ENCODE measurements at regions of chr5 and their contacts with region 1.

Region 1: GRCh38 chr5:115544436-115545350 is at the start of gene FEM1C:
- DNase-seq: peak; percentile 83
- ATAC-seq: peak; percentile 94
- H3K4me3 ChIP-seq: peak within 1 kb of the TSS; percentile 81
- H3K27ac ChIP-seq: peak within 1 kb of the TSS; percentile 88
- H3K4me1 ChIP-seq: peaks cover 4% of the 10 kb centered on the region
- H3K27me3 ChIP-seq: no peaks in the 10 kb centered on the region
- CTCF ChIP-seq: no peak
- EP300 ChIP-seq: no peak
- POLR2A ChIP-seq: peak; percentile 100
- RAD21 ChIP-seq: no peak
- polyA plus RNA-seq, gene FEM1C: 1.9 to 7.1 TPM

Region 2: GRCh38 chr5:114435885-114436299 is 1108.8 kb before region 1 on chr5:
- CTCF ChIA-PET with region 1: no interaction called
- POLR2A ChIA-PET with region 1: no interaction called
- RAD21 ChIA-PET with region 1: no interaction called
- SMC1A ChIA-PET with region 1: no interaction called
- in situ Hi-C with region 1: no loop called
- intact Hi-C with region 1: loop called (anchors 10 kb)
- DNase-seq: peak; percentile 73
- ATAC-seq: peak; percentile 84
- H3K4me3 ChIP-seq: no peak overlapping the region
- H3K27ac ChIP-seq: no peak overlapping the region
- H3K4me1 ChIP-seq: no peaks in the 10 kb centered on the region; the same call in 1 of the 2 replicates
- H3K27me3 ChIP-seq: no peaks in the 10 kb centered on the region
- CTCF ChIP-seq: no peak
- EP300 ChIP-seq: peak; percentile 69 to 82; a peak in 2 of 4 replicates
- POLR2A ChIP-seq: no peak
- RAD21 ChIP-seq: no peak

Region 3: GRCh38 chr5:115487756-115488155 is 56.9 kb before region 1 on chr5:
- CTCF ChIA-PET with region 1: no interaction called
- POLR2A ChIA-PET with region 1: interaction called, 3 read pairs
- RAD21 ChIA-PET with region 1: interaction called, 3 read pairs
- SMC1A ChIA-PET with region 1: interaction called, 3 read pairs
- in situ Hi-C with region 1: no loop called
- intact Hi-C with region 1: loop called (anchors 2 kb)
- DNase-seq: no peak
- ATAC-seq: peak; percentile 79
- H3K4me3 ChIP-seq: no peak overlapping the region
- H3K27ac ChIP-seq: no peak overlapping the region
- H3K4me1 ChIP-seq: peaks cover 11% of the 10 kb centered on the region
- H3K27me3 ChIP-seq: no peaks in the 10 kb centered on the region
- CTCF ChIP-seq: no peak
- EP300 ChIP-seq: no peak
- POLR2A ChIP-seq: no peak
- RAD21 ChIP-seq: no peak

Region 4: GRCh38 chr5:115579747-115580173 is 35.1 kb after region 1 on chr5:
- CTCF ChIA-PET with region 1: interaction called, 58 read pairs
- POLR2A ChIA-PET with region 1: interaction called, 9 read pairs
- RAD21 ChIA-PET with region 1: interaction called, 66 read pairs
- SMC1A ChIA-PET with region 1: interaction called, 74 read pairs
- in situ Hi-C with region 1: no loop called
- intact Hi-C with region 1: loop called (anchors 2 kb)
- DNase-seq: peak; percentile 77
- ATAC-seq: peak; percentile 81
- H3K4me3 ChIP-seq: no peak overlapping the region
- H3K27ac ChIP-seq: peak overlapping the region; percentile 85
- H3K4me1 ChIP-seq: peaks cover 44% of the 10 kb centered on the region
- H3K27me3 ChIP-seq: no peaks in the 10 kb centered on the region
- CTCF ChIP-seq: no peak
- EP300 ChIP-seq: peak; percentile 60 to 63; a peak in 2 of 4 replicates
- POLR2A ChIP-seq: no peak
- RAD21 ChIP-seq: no peak

Region 5: GRCh38 chr5:115625579-115626444 is 81.1 kb after region 1 on chr5 and contains the start of gene TMED7:
- CTCF ChIA-PET with region 1: interaction called, 4 read pairs
- POLR2A ChIA-PET with region 1: interaction called, 8 read pairs
- RAD21 ChIA-PET with region 1: interaction called, 8 read pairs
- SMC1A ChIA-PET with region 1: interaction called, 11 read pairs
- in situ Hi-C with region 1: no loop called
- intact Hi-C with region 1: loop called (anchors 2 kb)
- DNase-seq: peak; percentile 95
- ATAC-seq: peak; percentile 93
- H3K4me3 ChIP-seq: peak within 1 kb of the TSS; percentile 91
- H3K27ac ChIP-seq: peak within 1 kb of the TSS; percentile 86
- H3K4me1 ChIP-seq: peaks cover 5% of the 10 kb centered on the region; the same call in 1 of the 2 replicates
- H3K27me3 ChIP-seq: no peaks in the 10 kb centered on the region
- CTCF ChIP-seq: no peak
- EP300 ChIP-seq: peak in 1 of 2 experiments; percentile 48; a peak in 2 of 4 replicates
- POLR2A ChIP-seq: peak; percentile 86
- RAD21 ChIP-seq: no peak
- polyA plus RNA-seq, gene TMED7: 8.0 to 10.3 TPM

Region 6: GRCh38 chr5:116076496-116076895 is 531.8 kb after region 1 on chr5:
- CTCF ChIA-PET with region 1: no interaction called
- POLR2A ChIA-PET with region 1: no interaction called
- RAD21 ChIA-PET with region 1: no interaction called
- SMC1A ChIA-PET with region 1: interaction called, 4 read pairs
- in situ Hi-C with region 1: no loop called
- intact Hi-C with region 1: loop called (anchors 10 kb)
- DNase-seq: peak; percentile 79
- ATAC-seq: peak; percentile 98
- H3K4me3 ChIP-seq: no peak overlapping the region
- H3K27ac ChIP-seq: no peak overlapping the region
- H3K4me1 ChIP-seq: peaks cover 18% of the 10 kb centered on the region
- H3K27me3 ChIP-seq: no peaks in the 10 kb centered on the region
- CTCF ChIP-seq: no peak
- EP300 ChIP-seq: peak in 1 of 2 experiments; percentile 60; a peak in 2 of 4 replicates
- POLR2A ChIP-seq: no peak
- RAD21 ChIP-seq: no peak